ENCODE measurements at regions of chr16 and their contacts with region 1.

Region 1: DNA sequence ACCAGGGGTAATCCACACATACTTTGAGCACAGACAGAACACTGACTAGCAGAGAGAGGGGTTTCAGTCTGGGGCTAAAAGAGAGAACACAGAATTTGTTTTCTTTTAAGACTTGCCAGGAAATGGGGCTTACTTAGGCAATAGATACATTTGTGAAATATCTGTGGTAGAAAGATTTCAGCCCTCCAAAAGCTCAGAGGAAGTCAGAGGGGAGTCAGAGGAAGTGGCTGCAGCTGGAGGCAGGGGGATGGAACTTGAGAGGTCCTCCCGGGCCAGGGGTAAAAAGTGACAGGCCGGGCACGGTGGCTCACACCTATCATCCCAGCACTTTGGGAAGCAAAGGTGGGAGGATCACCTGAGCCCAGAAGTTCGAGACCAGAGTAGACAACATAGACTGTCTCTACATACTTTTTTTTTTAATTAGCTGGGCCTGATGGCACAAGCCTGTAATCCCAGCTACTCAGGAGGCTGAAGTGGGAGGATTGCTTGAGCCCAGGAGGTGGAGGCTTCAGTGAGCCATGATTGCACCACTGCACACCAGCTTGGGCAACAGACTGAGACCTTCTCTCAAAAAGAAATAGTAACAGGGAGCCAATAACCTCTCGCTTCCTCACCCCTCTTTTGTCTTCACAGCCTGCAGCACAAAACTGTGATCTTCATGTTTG is 49.9 kb downstream of the NLRC5 start:
- DNase-seq: peak; percentile 93
- H3K4me3 ChIP-seq: peak overlapping the region; percentile 69
- H3K27ac ChIP-seq: peak overlapping the region; percentile 98
- H3K4me1 ChIP-seq: peaks cover 87% of the 10 kb centered on the region
- CTCF ChIP-seq: no peak

Region 2: GRCh38 chr16:56851671-56852400 is 187.4 kb before region 1 on chr16:
- CTCF ChIA-PET with region 1: no interaction called
- POLR2A ChIA-PET with region 1: no interaction called
- intact Hi-C with region 1: no loop called
- DNase-seq: peak; percentile 65
- H3K4me3 ChIP-seq: no peak overlapping the region
- H3K27ac ChIP-seq: no peak overlapping the region
- H3K4me1 ChIP-seq: peaks cover 46% of the 10 kb centered on the region
- CTCF ChIP-seq: peak; percentile 85

Region 3: DNA sequence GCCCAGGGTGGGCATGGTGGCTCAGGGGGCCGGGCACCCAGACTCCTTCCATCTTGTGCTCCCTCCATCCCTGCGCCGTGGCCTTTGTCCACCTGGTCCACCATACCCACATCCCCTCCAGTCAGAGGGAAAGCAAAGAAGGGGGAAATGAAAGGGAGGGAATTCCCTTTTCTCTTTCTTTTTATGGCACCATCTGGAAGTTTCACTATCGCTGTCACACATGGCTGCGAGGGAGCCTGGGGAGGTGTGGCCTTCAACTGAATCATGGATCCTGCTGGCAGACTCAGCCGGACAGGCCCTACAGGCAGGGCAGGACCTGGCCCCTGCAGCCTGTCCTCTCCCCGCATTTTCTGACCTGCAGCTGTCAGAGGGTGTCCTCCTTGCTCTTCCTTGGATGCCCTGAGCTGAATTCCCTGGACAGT is 168.1 kb before region 1 on chr16:
- CTCF ChIA-PET with region 1: no interaction called
- POLR2A ChIA-PET with region 1: no interaction called
- intact Hi-C with region 1: no loop called
- DNase-seq: no peak
- H3K4me3 ChIP-seq: no peak overlapping the region
- H3K27ac ChIP-seq: no peak overlapping the region
- H3K4me1 ChIP-seq: peaks cover 45% of the 10 kb centered on the region
- CTCF ChIP-seq: no peak

Region 4: DNA sequence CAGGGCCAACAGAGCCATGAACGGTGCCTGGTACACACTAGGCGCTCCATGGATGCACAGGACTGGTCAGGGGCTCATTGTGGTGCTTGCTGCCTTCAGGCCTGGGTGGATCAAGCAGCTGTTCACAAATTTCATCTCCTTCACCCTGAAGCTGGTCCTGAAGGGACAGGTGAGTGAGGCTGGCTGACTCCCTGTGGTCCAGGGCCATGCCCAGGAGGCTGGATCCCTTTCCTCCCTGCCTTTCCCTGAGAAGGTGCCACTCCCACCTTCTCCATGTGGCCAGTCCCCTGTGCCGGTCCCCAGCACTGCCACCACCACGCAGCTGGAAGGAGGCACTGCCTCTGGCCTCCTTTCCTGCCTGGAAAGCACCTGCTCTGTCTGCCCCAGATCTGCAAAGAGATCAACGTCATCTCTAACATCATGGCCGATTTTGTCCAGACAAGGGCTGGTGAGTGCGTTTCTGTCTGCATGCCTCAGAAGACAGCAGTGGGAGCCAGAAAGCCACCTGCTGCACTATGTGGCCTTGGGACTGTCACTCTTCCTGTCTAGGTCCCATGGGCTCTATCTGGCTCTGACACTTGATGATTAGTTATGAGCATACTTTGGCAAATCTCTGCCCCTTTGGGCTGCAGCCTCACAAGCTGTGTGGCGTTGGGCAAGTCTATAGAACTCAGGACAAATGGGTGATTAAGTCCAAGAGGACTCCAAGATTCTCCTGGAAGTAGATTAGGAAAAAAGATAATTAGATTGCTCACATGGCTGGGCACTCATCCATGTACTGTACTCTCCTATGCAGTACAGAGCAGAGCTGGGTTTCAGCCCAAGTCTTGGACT is 68.1 kb before region 1 on chr16:
- CTCF ChIA-PET with region 1: interaction called, 4 read pairs
- POLR2A ChIA-PET with region 1: interaction called, 7 read pairs
- intact Hi-C with region 1: loop called (anchors 1 kb)
- DNase-seq: peak; percentile 91
- H3K4me3 ChIP-seq: no peak overlapping the region
- H3K27ac ChIP-seq: peak overlapping the region; percentile 73
- H3K4me1 ChIP-seq: peaks cover 62% of the 10 kb centered on the region
- CTCF ChIP-seq: no peak; the same call in 1 of the 2 replicates

Region 5: GRCh38 chr16:57003439-57004386 is 35.6 kb before region 1 on chr16:
- CTCF ChIA-PET with region 1: interaction called, 4 read pairs
- POLR2A ChIA-PET with region 1: interaction called, 76 read pairs
- intact Hi-C with region 1: loop called (anchors 1 kb)
- DNase-seq: peak; percentile 76
- H3K4me3 ChIP-seq: peak overlapping the region; percentile 43
- H3K27ac ChIP-seq: peak overlapping the region; percentile 74
- H3K4me1 ChIP-seq: peaks cover 76% of the 10 kb centered on the region
- CTCF ChIP-seq: no peak

Region 6: DNA sequence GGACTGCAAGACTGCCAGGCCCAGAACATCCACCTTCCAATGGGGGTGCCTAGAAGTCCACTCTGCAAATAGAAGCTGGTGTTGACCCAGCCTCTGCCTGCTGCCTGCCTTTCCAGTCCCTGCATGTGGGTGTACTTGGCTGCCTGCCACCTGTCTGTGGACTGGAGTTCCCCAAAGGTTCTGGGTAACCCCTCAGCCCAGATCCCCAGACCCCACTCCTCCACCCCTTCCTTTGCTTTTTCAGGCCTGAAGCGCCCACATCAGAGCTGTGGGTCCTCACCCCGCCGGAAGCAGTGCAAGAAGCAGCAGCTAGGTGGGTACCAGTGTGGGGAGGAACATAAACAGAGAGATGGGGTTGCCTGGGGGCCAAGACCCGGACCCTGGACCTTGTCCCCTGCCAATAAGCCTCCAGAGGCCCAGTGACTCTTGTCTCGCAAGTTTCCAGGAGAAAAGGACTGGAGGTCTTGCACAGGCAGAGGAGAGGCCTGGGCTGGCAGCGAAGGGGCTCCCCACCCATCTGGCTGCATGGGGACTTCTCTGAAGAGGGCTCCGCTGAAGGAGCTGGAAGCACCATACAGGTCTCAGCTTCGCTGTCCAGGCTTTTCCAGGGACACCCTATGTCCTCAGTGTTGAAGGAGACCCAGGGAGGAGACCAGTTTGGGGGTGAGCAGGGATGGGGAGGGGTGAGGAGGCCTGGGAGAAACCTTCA is 15.6 kb before region 1 on chr16:
- CTCF ChIA-PET with region 1: interaction called, 3 read pairs
- POLR2A ChIA-PET with region 1: interaction called, 12 read pairs
- intact Hi-C with region 1: no loop called
- DNase-seq: no peak
- H3K4me3 ChIP-seq: no peak overlapping the region
- H3K27ac ChIP-seq: no peak overlapping the region
- H3K4me1 ChIP-seq: peaks cover 12% of the 10 kb centered on the region
- CTCF ChIP-seq: no peak

Region 7: GRCh38 chr16:58843675-58844074 is 1804.4 kb after region 1 on chr16:
- CTCF ChIA-PET with region 1: no interaction called
- POLR2A ChIA-PET with region 1: no interaction called
- intact Hi-C with region 1: no loop called
- DNase-seq: peak; percentile 37
- H3K4me3 ChIP-seq: no peak overlapping the region
- H3K27ac ChIP-seq: no peak overlapping the region
- H3K4me1 ChIP-seq: no peaks in the 10 kb centered on the region
- CTCF ChIP-seq: peak; percentile 72